ENCODE measurements at regions of chr3 and their contacts with region 1.

Region 1: GRCh38 chr3:113745273-113746068 is 578 bp downstream of the NAA50 start:
- DNase-seq: peak; percentile 62
- H3K4me3 ChIP-seq: peak overlapping the region; percentile 87
- H3K27me3 ChIP-seq: no peaks in the 10 kb centered on the region
- CTCF ChIP-seq: peak; percentile 68

Region 2: GRCh38 chr3:113707835-113708234 is 37.6 kb before region 1 on chr3:
- CTCF ChIA-PET with region 1: no interaction called
- POLR2A ChIA-PET with region 1: no interaction called
- DNase-seq: no peak
- H3K4me3 ChIP-seq: no peak overlapping the region
- H3K27me3 ChIP-seq: no peaks in the 10 kb centered on the region
- CTCF ChIP-seq: no peak

Region 3: DNA sequence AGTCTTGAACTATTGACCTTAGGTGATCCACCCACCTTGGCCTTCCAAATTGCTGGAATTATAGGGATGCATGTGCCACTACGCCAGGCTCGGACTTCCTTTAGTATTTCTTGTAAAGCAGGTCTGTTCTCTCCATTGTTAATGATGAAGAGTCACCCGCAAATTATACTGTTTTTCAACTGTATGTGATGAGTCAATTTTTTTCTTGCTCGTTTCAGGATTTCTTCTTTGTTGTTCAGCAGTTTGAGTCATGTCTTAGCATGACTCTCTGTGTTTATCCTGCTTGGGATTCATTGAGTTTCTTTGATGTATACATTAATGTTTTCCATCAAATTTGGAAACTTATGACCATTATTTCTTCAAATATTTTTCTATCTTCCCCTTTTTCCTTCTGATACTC is 122.0 kb after region 1 on chr3:
- CTCF ChIA-PET with region 1: no interaction called
- POLR2A ChIA-PET with region 1: no interaction called
- DNase-seq: peak; percentile 9
- H3K4me3 ChIP-seq: no peak overlapping the region
- H3K27me3 ChIP-seq: no peaks in the 10 kb centered on the region
- CTCF ChIP-seq: no peak

Region 4: GRCh38 chr3:114393367-114394072 is 648.0 kb after region 1 on chr3:
- CTCF ChIA-PET with region 1: no interaction called
- POLR2A ChIA-PET with region 1: interaction called, 15 read pairs
- DNase-seq: no peak
- H3K4me3 ChIP-seq: no peak overlapping the region
- H3K27me3 ChIP-seq: no peaks in the 10 kb centered on the region
- CTCF ChIP-seq: no peak

Measured in BJ (cell line).